Activated naive CD8-positive, alpha-beta T cell treated with anti-CD3 and anti-CD28 coated beads, Interleukin-2, amount 10 ng/mL, durations not matched to agents 7 days and 5 days (primary cell): ENCODE measurements at regions of chr1 and their contacts with region 1.

Region 1: DNA sequence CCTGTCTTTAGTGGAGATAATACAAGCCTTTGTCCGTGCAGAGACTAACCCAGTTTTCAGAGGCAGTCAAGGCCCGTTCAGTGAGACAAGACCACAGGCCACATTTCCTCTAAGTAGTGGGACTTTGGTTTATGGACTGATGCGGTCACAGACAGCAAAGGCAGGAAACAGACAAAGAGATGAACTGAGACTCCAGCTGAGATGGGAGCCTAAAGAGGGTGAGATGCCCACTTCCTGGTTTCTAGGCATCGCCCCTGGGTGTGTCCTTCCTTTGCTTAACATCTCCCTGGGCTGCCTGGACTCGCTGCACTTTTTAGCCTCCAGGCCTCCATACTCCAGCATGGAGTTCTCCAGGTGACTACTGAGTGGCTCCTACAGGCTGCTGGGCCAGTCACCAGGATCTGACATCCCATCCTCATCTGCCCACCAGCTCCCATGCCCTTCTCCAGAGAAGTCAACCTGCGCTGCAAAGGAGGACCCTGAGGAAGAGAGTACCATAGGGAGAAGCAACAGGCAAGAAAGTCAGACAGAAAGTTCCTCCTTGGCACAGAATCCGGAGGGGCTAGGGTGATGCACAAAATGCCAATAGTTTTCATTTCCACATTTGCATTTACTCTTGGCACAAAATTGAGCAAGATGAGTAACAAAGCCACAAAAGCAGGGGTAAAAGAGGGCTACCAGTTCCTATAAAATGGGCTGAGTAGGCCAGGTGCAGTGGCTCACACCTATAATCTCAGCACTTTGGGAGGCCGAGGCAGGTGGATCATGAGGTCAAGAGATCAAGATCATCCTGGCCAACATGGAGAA is 15.1 kb downstream of the THEMIS2 start:
- DNase-seq: peak; percentile 48
- ATAC-seq: peak; percentile 85
- H3K4me3 Mint-ChIP-seq: peak overlapping the region; percentile 75
- H3K27ac Mint-ChIP-seq: peak overlapping the region; percentile 90
- H3K4me1 Mint-ChIP-seq: peaks cover 64% of the 10 kb centered on the region
- H3K27me3 Mint-ChIP-seq: no peaks in the 10 kb centered on the region

Region 2: DNA sequence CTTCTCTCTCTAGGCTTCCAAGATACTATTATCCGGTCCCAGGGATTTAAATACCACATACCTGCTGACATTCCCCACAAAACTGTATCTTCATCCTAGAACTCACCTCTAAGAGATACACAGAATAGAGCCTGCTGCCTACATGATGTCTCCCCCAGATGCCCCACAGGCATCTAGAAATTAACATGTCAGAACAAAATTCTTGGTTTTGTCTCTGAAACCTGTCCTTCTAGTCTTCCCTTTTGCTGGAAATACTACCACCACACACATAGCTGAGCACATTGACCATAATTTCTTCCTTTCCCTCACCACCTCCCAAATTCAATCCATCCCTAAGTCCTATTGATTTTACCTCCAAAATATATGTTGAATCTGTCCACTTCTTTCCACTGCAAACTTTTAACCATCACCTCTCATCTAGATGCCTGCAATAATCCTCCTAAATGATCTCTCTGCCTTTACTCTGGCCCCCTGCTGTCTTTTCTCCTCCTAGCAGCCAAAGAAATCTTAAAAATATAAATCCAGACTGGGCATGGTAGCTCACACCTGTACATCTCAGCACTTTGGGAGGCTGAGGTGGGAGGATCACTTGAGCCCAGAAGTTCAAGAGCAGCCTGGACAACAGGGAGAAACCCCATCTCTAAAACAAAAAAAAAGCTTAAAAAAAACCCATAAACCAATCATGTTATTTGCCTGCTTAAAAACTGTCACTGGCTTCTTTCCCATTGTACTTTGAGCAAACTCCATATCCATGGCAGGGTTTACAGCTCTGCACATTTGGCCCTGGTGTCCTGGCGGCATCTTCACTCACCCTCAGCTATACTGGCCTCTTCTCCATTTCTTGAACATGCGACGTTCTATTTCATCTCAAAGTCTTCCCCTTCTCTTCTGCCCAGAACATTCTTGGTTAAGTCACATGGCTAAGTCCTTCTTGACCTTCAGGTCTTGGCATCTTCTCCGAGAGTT is 167.8 kb before region 1 on chr1:
- POLR2A ChIA-PET with region 1: no interaction called
- DNase-seq: no peak
- ATAC-seq: no peak
- H3K4me3 Mint-ChIP-seq: no peak overlapping the region
- H3K27ac Mint-ChIP-seq: no peak overlapping the region
- H3K4me1 Mint-ChIP-seq: peaks cover 2% of the 10 kb centered on the region
- H3K27me3 Mint-ChIP-seq: peaks cover 24% of the 10 kb centered on the region

Region 3: GRCh38 chr1:27872059-27872801 is 15.2 kb before region 1 on chr1 and contains the start of gene THEMIS2:
- POLR2A ChIA-PET with region 1: interaction called, 13 read pairs
- DNase-seq: peak; percentile 84
- ATAC-seq: peak; percentile 71
- H3K4me3 Mint-ChIP-seq: peak within 1 kb of the TSS; percentile 95
- H3K27ac Mint-ChIP-seq: peak within 1 kb of the TSS; percentile 90
- H3K4me1 Mint-ChIP-seq: peaks cover 33% of the 10 kb centered on the region
- H3K27me3 Mint-ChIP-seq: no peaks in the 10 kb centered on the region
- total RNA-seq, gene THEMIS2: 35.4 to 40.5 TPM